Posterior cingulate gyrus (tissue), 11 donors: ENCODE measurements at regions of chr16 and their contacts with region 1.

Region 1: DNA sequence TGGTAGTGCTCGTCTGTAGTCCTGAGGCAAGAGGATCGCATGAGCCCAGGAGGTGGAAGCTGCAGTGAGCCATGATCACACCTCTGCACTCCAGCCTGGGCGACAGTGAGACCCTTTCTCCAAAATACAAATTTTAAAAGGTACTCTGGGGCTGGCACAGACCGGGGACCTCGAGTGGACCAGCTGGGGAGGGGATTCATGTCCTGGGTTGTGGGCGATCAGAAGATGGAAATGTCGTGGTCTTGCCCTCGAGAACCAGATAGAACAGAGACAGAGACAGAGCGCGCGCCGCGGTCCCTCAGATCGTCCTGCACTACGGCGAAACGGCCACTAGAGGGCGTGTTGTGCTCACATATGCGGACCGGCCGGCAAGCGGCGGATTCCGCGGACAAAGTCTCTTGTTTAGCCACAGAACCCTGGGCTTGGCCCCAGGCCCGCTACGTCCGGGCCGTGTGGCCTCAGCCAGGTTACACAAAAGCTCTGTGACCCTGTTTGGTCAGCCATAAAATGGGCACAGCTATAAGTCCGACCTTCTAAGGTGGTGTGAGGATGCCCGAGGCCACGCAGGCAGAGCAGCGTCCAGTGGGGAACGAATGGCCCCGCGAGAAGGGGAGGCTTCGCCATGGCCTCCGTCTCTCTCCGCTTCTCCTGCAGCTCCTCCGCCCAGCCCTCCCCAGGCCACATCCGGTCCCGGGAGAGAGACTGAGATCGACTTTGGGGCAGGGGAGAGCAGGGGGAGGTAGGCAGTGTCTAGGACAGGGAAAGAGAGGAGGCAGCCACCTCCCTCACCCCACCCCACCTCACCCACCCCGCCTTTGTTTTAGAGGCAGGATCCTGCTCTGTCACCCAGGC is 14.6 kb upstream of the SBK1 start:
- DNase-seq: peak; percentile 65 to 97 (median 89)

Region 2: DNA sequence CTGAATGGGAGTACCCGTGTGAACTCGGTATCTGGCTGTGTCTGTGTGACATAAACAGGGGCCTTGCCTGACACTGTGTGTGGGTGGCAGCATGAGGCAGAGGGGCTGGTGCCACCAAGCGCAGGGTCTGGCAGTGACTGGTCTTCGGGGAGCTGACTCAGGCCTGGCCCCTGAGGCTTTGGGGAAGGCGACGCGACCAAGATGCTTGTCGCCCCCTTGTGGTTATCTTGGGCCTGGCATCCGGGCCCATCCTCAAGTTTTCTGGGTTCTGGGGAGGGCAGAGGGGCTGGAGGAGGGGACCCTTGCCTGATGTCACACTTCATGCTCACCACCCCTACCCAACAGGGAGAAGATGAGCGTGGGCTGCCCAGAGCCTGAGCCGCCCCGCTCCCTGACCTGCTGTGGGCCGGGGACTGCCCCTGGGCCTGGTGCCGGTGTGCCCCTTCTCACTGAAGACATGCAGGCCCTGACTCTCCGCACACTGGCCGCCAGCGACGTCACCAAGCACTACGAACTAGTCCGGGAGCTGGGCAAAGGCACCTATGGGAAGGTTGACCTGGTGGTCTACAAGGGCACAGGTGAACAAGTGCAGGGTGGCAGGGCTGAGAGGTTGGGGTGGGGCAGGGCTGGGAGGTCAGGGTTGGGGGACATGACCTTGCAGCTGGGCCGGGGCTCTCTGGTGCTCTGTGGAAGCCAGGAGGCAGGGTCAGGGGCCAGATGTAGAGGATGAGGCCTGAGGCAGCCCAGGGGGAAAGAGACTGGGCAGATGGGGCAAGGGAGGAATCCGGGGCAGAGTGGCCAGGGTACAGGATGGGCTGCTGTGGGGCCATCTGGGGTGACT is 39.5 kb after region 1 on chr16:
- intact Hi-C with region 1: loop called (anchors 1 kb)
- DNase-seq: peak in 8 of 10 donors; percentile 60 to 92 (median 67)